ENCODE measurements at regions of chr1 and their contacts with region 1.

Region 1: DNA sequence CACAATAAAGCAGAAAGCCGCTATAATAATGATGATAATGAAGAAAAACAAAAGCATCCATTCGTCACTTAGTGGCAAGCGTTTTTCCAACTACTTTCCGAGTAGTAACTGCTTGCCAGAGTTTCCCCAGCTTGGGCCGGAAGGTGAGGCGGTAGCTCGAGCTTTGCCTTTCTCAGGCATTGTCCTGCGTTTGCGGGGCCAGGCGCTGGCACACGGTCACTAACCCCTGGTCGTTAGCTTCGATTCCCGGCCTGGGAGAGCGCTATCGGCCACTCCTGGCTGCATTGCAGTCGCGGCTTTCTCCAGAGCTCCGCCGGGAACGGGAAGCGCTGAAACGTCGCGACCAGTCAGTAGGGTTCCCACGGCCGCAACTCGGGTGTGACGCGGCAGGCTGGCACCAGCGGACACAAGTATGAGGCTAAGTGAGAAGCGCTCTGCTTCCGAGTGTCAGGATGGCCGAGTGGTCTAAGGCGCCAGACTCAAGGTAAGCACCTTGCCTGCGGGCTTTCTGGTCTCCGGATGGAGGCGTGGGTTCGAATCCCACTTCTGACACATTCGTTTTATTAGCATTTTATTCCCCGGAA is 14.6 kb upstream of the ZNF692 start:
- DNase-seq: peak; percentile 95
- ATAC-seq: peak; percentile 80
- H3K4me3 ChIP-seq: peak overlapping the region; percentile 68 to 98 (median 84)
- H3K4me3 Mint-ChIP-seq: peak overlapping the region; percentile 95
- H3K27ac ChIP-seq: peak overlapping the region; percentile 64 to 81
- H3K27ac Mint-ChIP-seq: peak overlapping the region; percentile 97
- H3K4me1 ChIP-seq: peaks cover 0 to 23% of the 10 kb centered on the region in 2 donors
- H3K4me1 Mint-ChIP-seq: peaks cover 30% of the 10 kb centered on the region
- H3K27me3 ChIP-seq: no peaks in the 10 kb centered on the region
- H3K27me3 Mint-ChIP-seq: no peaks in the 10 kb centered on the region
- CTCF ChIP-seq: no peak

Region 2: DNA sequence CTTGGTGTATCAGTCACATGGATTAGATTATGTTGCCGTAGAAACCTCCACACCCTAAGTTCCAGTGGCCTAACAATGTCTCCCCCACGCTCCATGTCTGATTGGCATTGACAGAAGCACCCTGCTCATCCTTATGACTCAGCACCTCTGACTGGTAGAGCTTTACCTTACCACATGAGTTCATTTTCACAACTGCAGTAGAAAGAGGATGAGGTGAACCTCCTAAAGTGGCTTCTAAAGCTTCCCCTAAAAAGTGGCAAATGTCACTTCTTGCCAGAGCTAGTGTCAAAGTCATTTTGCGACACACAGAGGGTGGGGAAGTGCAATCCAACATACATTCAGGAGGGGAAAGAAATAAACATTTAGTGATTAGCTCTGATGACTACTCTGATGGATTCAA is 87.3 kb before region 1 on chr1:
- CTCF ChIA-PET with region 1: no interaction called
- POLR2A ChIA-PET with region 1: no interaction called
- intact Hi-C with region 1: no loop called
- DNase-seq: no peak
- ATAC-seq: peak; percentile 31
- H3K4me3 ChIP-seq: no peak overlapping the region
- H3K4me3 Mint-ChIP-seq: peak overlapping the region; percentile 26
- H3K27ac ChIP-seq: peak overlapping the region in 1 of 2 donors; percentile 55
- H3K27ac Mint-ChIP-seq: peak overlapping the region; percentile 72
- H3K4me1 ChIP-seq: peaks cover 43 to 46% of the 10 kb centered on the region in 2 donors
- H3K4me1 Mint-ChIP-seq: peaks cover 40% of the 10 kb centered on the region
- H3K27me3 ChIP-seq: no peaks in the 10 kb centered on the region
- H3K27me3 Mint-ChIP-seq: no peaks in the 10 kb centered on the region
- CTCF ChIP-seq: no peak

Region 3: DNA sequence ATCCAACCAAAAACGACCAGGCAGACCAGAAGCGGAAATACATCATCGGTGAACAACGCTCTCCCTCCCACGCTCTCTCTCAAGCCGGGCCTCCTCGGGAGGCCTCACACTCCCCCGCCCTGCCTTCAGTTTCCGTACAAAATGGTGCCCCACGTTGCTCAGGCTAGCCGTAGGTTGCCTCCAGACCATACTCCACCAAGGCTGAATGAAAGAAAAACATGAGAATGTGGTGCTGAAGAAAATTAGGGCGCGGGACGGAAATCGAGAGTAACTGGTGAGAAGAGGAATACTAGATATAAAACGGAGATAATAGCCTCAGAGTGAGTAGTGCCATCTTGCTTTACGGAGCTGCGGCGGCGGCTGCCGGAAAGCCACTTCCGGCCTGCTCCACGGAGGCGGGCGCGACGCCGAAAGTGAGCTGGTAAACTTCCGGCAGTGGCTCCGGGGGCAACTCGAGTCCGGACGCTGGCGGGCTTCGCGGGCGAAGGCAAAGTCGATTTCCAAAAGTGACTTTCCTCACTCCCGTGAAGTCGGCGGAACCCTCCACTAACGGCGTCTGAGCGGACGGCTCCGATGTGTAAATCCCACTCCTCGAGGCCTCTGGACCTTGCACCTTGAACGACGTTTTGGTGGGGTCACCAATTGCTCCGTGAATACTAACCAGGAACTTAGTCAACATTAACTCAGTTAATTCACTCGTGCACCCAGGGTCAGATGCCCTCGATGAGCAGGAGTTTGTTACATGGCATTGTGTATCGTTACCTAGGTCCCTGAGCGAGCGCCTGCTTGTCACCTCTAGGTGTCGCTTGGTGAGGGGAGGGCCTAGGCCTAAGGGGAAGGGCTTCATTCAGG is 47.4 kb before region 1 on chr1 and contains the start of gene SH3BP5L:
- CTCF ChIA-PET with region 1: interaction called, 7 read pairs
- POLR2A ChIA-PET with region 1: interaction called, 3 read pairs
- intact Hi-C with region 1: loop called (anchors 1 kb)
- DNase-seq: peak; percentile 98
- ATAC-seq: peak; percentile 84
- H3K4me3 ChIP-seq: peak within 1 kb of the TSS; percentile 86 to 99 (median 93)
- H3K4me3 Mint-ChIP-seq: peak within 1 kb of the TSS; percentile 95
- H3K27ac ChIP-seq: peak within 1 kb of the TSS; percentile 98
- H3K27ac Mint-ChIP-seq: peak within 1 kb of the TSS; percentile 96
- H3K4me1 ChIP-seq: peaks cover 52 to 54% of the 10 kb centered on the region in 2 donors
- H3K4me1 Mint-ChIP-seq: peaks cover 57% of the 10 kb centered on the region
- H3K27me3 ChIP-seq: no peaks in the 10 kb centered on the region
- H3K27me3 Mint-ChIP-seq: no peaks in the 10 kb centered on the region
- CTCF ChIP-seq: peak; percentile 84
- total RNA-seq, gene SH3BP5L: 35.7 and 36.5 TPM in 2 replicates

Region 4: DNA sequence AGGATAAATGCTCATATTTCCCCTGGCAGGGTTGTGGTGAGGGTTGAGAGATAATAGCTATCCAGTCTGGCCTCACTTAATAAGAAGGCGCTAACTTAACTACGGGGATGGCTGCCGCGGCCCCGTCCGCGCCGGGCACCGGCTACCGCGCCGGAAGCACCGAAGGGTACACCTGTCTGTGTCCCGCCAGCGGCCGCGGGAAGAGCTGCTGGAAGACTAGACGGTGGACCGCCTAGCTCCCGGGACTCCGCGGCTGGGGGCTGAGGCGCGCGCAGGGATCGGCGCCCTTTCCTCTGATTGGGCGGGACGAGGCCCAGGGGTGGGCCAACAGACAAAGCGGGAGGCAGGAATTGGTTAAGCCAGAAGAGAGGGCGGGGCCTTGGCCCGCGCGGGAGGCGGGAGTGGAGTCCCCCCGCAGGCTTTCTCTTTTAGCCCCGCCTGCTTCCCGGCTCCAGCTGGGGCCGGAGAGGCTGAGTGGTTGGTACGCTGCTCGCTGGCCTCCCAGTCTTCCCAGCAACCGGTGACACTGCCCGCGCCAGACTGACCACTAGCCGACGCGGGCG is 35.6 kb before region 1 on chr1 and contains the start of gene ZNF672:
- CTCF ChIA-PET with region 1: interaction called, 9 read pairs
- POLR2A ChIA-PET with region 1: interaction called, 6 read pairs
- intact Hi-C with region 1: loop called (anchors 1 kb)
- DNase-seq: peak; percentile 94
- ATAC-seq: peak; percentile 82
- H3K4me3 ChIP-seq: peak within 1 kb of the TSS; percentile 65 to 94 (median 92)
- H3K4me3 Mint-ChIP-seq: no peak within 1 kb of the TSS
- H3K27ac ChIP-seq: peak within 1 kb of the TSS; percentile 97 to 99
- H3K27ac Mint-ChIP-seq: no peak within 1 kb of the TSS
- H3K4me1 ChIP-seq: peaks cover 42 to 47% of the 10 kb centered on the region in 2 donors
- H3K4me1 Mint-ChIP-seq: peaks cover 36% of the 10 kb centered on the region
- H3K27me3 ChIP-seq: no peaks in the 10 kb centered on the region
- H3K27me3 Mint-ChIP-seq: no peaks in the 10 kb centered on the region
- CTCF ChIP-seq: no peak
- total RNA-seq, gene ZNF672: 56.3 and 62.2 TPM in 2 replicates

Region 5: GRCh38 chr1:248906009-248906752 is 32.7 kb after region 1 on chr1 and contains the start of gene PGBD2:
- CTCF ChIA-PET with region 1: interaction called, 4 read pairs
- POLR2A ChIA-PET with region 1: no interaction called
- intact Hi-C with region 1: loop called (anchors 1 kb)
- DNase-seq: peak; percentile 96
- ATAC-seq: peak; percentile 84
- H3K4me3 ChIP-seq: peak within 1 kb of the TSS; percentile 69 to 84 (median 71)
- H3K4me3 Mint-ChIP-seq: peak within 1 kb of the TSS; percentile 94
- H3K27ac ChIP-seq: peak within 1 kb of the TSS; percentile 78 to 94
- H3K27ac Mint-ChIP-seq: peak within 1 kb of the TSS; percentile 97
- H3K4me1 ChIP-seq: peaks cover 15 to 20% of the 10 kb centered on the region in 2 donors
- H3K4me1 Mint-ChIP-seq: peaks cover 47% of the 10 kb centered on the region
- H3K27me3 ChIP-seq: no peaks in the 10 kb centered on the region
- H3K27me3 Mint-ChIP-seq: no peaks in the 10 kb centered on the region
- CTCF ChIP-seq: peak; percentile 66
- total RNA-seq, gene PGBD2: 27.7 and 29.2 TPM in 2 replicates

Region 6: DNA sequence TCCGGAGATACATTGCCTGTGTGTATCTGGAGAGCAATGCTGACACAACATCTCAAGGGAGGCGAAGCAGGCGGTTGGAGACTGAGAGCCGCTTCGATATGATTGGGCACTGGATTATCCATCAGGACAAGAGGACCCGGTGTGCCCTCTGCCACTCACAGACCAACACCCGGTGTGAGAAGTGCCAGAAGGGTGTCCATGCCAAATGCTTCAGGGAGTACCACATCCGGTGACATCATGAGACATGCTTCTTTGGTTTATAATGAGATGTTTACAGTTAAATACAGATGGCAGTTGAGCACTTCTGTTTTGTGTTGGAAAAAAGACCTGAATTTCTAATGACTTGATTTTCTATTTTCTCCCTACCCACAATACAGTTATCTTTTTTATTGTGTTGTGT is 44.6 kb after region 1 on chr1:
- CTCF ChIA-PET with region 1: no interaction called
- POLR2A ChIA-PET with region 1: no interaction called
- intact Hi-C with region 1: no loop called
- DNase-seq: no peak
- ATAC-seq: no peak
- H3K4me3 ChIP-seq: no peak overlapping the region
- H3K4me3 Mint-ChIP-seq: no peak overlapping the region
- H3K27ac ChIP-seq: no peak overlapping the region
- H3K27ac Mint-ChIP-seq: no peak overlapping the region
- H3K4me1 ChIP-seq: peaks cover 0 to under 1% of the 10 kb centered on the region in 2 donors
- H3K4me1 Mint-ChIP-seq: peaks cover 23% of the 10 kb centered on the region
- H3K27me3 ChIP-seq: no peaks in the 10 kb centered on the region
- H3K27me3 Mint-ChIP-seq: no peaks in the 10 kb centered on the region
- CTCF ChIP-seq: no peak